Gastrocnemius medialis (tissue), 4 donors: ENCODE measurements at regions of chr4 and their contacts with region 1.

Region 1: GRCh38 chr4:112214390-112215264 is 17.0 kb upstream of the AP1AR start:
- DNase-seq: no peak
- ATAC-seq: peak in 1 of 2 donors; percentile 49
- H3K4me3 ChIP-seq: no peak overlapping the region
- H3K27ac ChIP-seq: no peak overlapping the region
- H3K4me1 ChIP-seq: no peaks in the 10 kb centered on the region
- H3K27me3 ChIP-seq: no peaks in the 10 kb centered on the region
- CTCF ChIP-seq: peak; percentile 27 to 55 (median 28)
- POLR2A ChIP-seq: no peak

Region 2: GRCh38 chr4:111736516-111736915 is 478.1 kb before region 1 on chr4:
- in situ Hi-C with region 1: no loop called
- intact Hi-C with region 1: no loop called
- DNase-seq: no peak
- ATAC-seq: no peak
- H3K4me3 ChIP-seq: no peak overlapping the region
- H3K27ac ChIP-seq: no peak overlapping the region
- H3K4me1 ChIP-seq: no peaks in the 10 kb centered on the region
- H3K27me3 ChIP-seq: no peaks in the 10 kb centered on the region
- CTCF ChIP-seq: no peak
- POLR2A ChIP-seq: no peak

Region 3: DNA sequence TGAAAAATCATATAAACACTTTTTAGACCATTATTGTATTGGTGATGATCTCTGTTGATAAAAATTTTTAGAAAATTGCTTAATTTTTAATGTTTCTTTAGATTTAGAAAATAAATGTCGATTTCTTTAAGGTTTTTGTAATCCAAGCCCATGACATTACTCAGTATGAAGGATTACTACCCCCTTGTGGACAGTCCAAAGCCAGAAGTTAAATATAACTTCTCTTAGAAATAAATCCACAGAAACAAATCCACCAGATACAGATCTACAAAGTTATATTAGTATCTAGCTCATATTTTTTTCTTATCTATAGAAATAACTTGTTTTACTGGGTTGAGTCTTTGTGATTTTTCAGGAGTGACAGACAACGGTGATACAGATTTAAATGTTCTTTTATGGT is 52.2 kb after region 1 on chr4:
- in situ Hi-C with region 1: no loop called
- intact Hi-C with region 1: loop called (anchors 5 kb)
- DNase-seq: no peak
- ATAC-seq: peak in 1 of 2 donors; percentile 66
- H3K4me3 ChIP-seq: no peak overlapping the region
- H3K27ac ChIP-seq: no peak overlapping the region
- H3K4me1 ChIP-seq: peaks cover 5 to 9% of the 10 kb centered on the region in 2 donors
- H3K27me3 ChIP-seq: no peaks in the 10 kb centered on the region
- CTCF ChIP-seq: peak; percentile 19 to 55 (median 51)
- POLR2A ChIP-seq: no peak

Region 4: GRCh38 chr4:112379306-112379705 is 164.7 kb after region 1 on chr4:
- in situ Hi-C with region 1: no loop called
- intact Hi-C with region 1: no loop called
- DNase-seq: no peak
- ATAC-seq: no peak
- H3K4me3 ChIP-seq: peak overlapping the region in 3 of 4 donors; percentile 19 to 41 (median 33)
- H3K27ac ChIP-seq: no peak overlapping the region
- H3K4me1 ChIP-seq: no peaks in the 10 kb centered on the region
- H3K27me3 ChIP-seq: no peaks in the 10 kb centered on the region
- CTCF ChIP-seq: no peak
- POLR2A ChIP-seq: no peak